SK-N-SH (cell line): ENCODE measurements at regions of chr9 and their contacts with region 1.

Region 1: GRCh38 chr9:127503947-127504782 is 52.9 kb downstream of the LRSAM1 start:
- DNase-seq: peak; percentile 86
- H3K4me3 ChIP-seq: no peak overlapping the region; a peak in 1 of 4 replicates
- H3K27ac ChIP-seq: peak overlapping the region; percentile 4 to 59; a peak in 3 of 4 replicates
- H3K4me1 ChIP-seq: peaks cover 10 to 18% of the 10 kb centered on the region in 2 experiments; a peak in 2 of 4 replicates
- H3K27me3 ChIP-seq: no peaks in the 10 kb centered on the region
- CTCF ChIP-seq: peak; percentile 78
- EP300 ChIP-seq: no peak
- RAD21 ChIP-seq: peak; percentile 91

Region 2: DNA sequence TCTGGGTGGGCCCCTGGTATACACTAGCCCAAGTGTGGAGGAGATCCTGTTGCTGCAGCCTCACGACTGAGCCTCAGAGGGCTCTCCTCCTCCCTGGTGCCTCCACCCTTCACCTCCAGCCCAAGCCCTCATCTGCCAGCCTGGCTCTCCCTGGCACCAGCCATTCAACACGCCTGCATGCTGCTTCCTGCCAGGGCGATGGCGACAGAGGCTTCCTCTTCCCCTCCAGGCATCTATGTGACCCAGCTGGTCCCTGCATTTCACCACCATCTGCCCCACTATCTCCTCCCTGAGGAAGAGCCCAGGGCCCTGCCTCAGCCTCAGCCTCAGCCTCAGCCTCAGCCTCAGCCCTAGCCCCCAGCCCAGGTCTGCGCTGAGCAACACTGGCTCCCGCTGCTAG is 326.9 kb before region 1 on chr9:
- CTCF ChIA-PET with region 1: no interaction called
- POLR2A ChIA-PET with region 1: no interaction called
- DNase-seq: no peak
- H3K4me3 ChIP-seq: no peak overlapping the region
- H3K27ac ChIP-seq: no peak overlapping the region
- H3K4me1 ChIP-seq: peaks cover 0 to 12% of the 10 kb centered on the region in 2 experiments; a peak in 1 of 4 replicates
- H3K27me3 ChIP-seq: no peaks in the 10 kb centered on the region
- CTCF ChIP-seq: no peak
- EP300 ChIP-seq: no peak
- RAD21 ChIP-seq: no peak

Region 3: DNA sequence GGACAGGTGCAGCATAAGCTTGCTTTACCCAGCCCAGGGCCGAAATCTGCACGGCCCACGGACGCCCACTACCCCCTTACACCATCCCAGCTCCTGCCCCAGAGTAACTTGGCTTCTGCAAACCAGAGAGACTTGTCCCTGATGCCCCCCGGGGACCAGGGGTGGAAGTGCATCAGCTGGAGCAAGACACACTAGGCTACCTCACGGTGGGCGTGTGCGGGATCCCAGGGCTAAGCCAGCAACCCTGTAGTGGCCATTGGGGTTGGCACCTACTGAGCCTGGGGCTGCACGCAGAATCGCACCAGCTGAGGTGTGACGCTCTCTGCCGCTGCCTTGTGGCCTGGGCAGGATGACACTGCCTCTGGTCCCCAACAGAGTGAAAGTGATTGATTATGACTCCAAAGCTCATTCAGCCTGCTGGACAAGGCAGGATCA is 86.1 kb before region 1 on chr9:
- CTCF ChIA-PET with region 1: no interaction called
- POLR2A ChIA-PET with region 1: no interaction called
- DNase-seq: peak; percentile 53
- H3K4me3 ChIP-seq: no peak overlapping the region
- H3K27ac ChIP-seq: no peak overlapping the region
- H3K4me1 ChIP-seq: peaks cover 7 to 17% of the 10 kb centered on the region in 2 experiments; a peak in 2 of 4 replicates
- H3K27me3 ChIP-seq: no peaks in the 10 kb centered on the region
- CTCF ChIP-seq: no peak; the same call in 1 of the 2 replicates
- EP300 ChIP-seq: no peak
- RAD21 ChIP-seq: no peak

Region 4: GRCh38 chr9:127489471-127490115 is 14.6 kb before region 1 on chr9:
- CTCF ChIA-PET with region 1: interaction called, 25 read pairs
- POLR2A ChIA-PET with region 1: no interaction called
- DNase-seq: peak; percentile 71
- H3K4me3 ChIP-seq: no peak overlapping the region
- H3K27ac ChIP-seq: no peak overlapping the region
- H3K4me1 ChIP-seq: no peaks in the 10 kb centered on the region
- H3K27me3 ChIP-seq: no peaks in the 10 kb centered on the region
- CTCF ChIP-seq: 0 out of 2 replicates have a peak, but pooled peaks have one; percentile 14
- EP300 ChIP-seq: no peak
- RAD21 ChIP-seq: peak; percentile 24

Region 5: DNA sequence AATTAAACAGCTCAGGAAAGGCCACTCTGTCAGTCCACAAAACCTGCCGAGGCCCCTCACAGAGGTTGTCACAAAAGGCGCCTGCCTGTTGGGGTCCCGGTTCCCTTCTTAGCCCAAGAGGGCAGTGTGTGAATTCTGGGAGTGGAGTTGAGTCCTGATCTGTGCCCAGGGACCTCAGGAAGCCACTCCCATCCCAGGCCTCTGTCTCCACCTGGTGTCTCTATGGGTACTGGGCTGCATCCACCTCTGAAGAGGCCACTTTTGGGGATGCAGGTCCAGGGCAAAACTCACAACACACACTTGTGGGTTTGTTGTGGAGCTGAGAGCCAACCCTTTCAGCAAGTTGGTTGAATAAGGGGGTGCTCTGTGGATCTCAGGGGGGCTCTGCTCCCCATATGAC is 33.6 kb after region 1 on chr9:
- CTCF ChIA-PET with region 1: interaction called, 10 read pairs
- POLR2A ChIA-PET with region 1: no interaction called
- DNase-seq: peak; percentile 59
- H3K4me3 ChIP-seq: no peak overlapping the region
- H3K27ac ChIP-seq: peak overlapping the region in 1 of 2 experiments; percentile 91; a peak in 2 of 4 replicates
- H3K4me1 ChIP-seq: peaks cover 13 to 29% of the 10 kb centered on the region in 2 experiments; a peak in 3 of 4 replicates
- H3K27me3 ChIP-seq: no peaks in the 10 kb centered on the region
- CTCF ChIP-seq: peak; percentile 36
- EP300 ChIP-seq: no peak
- RAD21 ChIP-seq: peak; percentile 57

Region 6: GRCh38 chr9:127574072-127575017 is 70.2 kb after region 1 on chr9:
- CTCF ChIA-PET with region 1: interaction called, 277 read pairs
- POLR2A ChIA-PET with region 1: no interaction called
- DNase-seq: no peak
- H3K4me3 ChIP-seq: 0 out of 4 replicates have a peak overlapping the region, but pooled peaks of 1 of the 2 experiments have one; percentile 1
- H3K27ac ChIP-seq: peak overlapping the region; percentile 51 to 68; a peak in 3 of 4 replicates
- H3K4me1 ChIP-seq: peaks cover 22 to 24% of the 10 kb centered on the region in 2 experiments; a peak in 3 of 4 replicates
- H3K27me3 ChIP-seq: no peaks in the 10 kb centered on the region
- CTCF ChIP-seq: no peak
- EP300 ChIP-seq: no peak
- RAD21 ChIP-seq: 0 out of 2 replicates have a peak, but pooled peaks have one; percentile 18

Region 7: DNA sequence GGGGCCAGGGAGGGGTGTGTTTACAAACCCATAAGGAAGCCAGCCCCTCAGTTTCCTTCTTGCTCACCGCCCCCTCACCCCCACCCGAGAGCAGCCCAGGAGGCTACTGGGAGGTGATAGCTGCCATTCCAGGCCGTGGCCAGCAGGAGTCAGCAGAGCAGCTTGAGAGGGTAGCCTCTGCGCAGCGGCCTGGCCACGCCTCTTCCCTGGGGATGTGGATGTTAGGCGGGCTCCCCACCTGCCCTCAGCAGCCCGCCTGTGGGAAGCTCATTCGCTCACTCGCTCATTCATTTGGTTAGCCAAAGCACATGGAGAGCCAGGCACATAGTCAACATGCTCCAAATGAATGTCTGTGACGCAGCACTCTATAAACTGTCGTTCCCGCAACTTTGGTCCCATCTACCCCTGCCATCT is 439.6 kb after region 1 on chr9:
- CTCF ChIA-PET with region 1: no interaction called
- POLR2A ChIA-PET with region 1: no interaction called
- DNase-seq: peak; percentile 92
- H3K4me3 ChIP-seq: peak overlapping the region in 1 of 2 experiments; percentile 16; a peak in 1 of 4 replicates
- H3K27ac ChIP-seq: peak overlapping the region in 1 of 2 experiments; percentile 62; a peak in 1 of 4 replicates
- H3K4me1 ChIP-seq: peaks cover 0 to 50% of the 10 kb centered on the region in 2 experiments; a peak in 1 of 4 replicates
- H3K27me3 ChIP-seq: no peaks in the 10 kb centered on the region
- CTCF ChIP-seq: peak; percentile 90
- EP300 ChIP-seq: no peak
- RAD21 ChIP-seq: peak; percentile 91

Region 8: DNA sequence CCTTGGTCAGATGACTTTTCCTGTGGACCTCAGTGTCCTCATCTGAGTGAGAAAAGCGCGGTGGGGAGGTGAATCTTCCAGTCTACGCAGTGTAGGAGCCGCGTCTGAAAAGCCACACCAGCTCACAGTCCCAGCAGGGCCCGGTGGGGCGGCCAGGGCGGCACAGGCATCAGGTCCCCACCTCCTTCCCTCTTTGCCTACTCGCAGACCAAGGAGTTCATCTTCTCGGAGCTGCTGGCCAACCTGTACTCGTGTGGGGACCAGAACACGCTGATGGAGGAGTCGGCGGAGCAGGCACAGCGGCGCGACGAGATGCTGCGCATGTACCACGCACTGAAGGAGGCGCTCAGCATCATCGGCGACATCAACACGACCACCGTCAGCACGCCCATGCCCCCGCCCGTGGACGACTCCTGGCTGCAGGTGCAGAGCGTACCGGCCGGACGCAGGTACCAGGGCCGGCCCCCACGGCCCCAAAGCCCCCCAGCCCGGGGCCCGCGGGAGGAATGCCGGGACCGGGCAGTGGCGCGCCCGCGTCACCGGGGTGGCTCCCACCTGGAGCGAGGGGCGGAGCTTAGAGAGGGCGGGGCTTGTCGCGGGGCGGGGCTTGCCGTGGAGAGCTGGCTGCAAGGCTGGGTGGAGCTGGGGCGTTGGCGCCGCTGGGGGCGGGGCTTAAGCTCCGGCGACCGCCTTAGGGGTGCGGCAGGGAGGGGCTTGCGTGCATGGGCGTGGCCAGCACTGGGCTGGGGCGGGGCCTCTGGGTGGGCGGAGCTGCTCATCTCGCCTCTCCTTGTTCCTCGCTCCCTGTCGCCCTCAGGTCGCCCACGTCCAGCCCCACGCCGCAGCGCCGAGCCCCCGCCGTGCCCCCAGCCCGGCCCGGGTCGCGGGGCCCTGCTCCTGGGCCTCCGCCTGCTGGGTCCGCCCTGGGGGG is 746.0 kb after region 1 on chr9:
- CTCF ChIA-PET with region 1: no interaction called
- POLR2A ChIA-PET with region 1: no interaction called
- DNase-seq: peak; percentile 92
- H3K4me3 ChIP-seq: no peak overlapping the region
- H3K27ac ChIP-seq: no peak overlapping the region; a peak in 1 of 4 replicates
- H3K4me1 ChIP-seq: peaks cover 12 to 17% of the 10 kb centered on the region in 2 experiments
- H3K27me3 ChIP-seq: no peaks in the 10 kb centered on the region
- CTCF ChIP-seq: no peak
- EP300 ChIP-seq: no peak
- RAD21 ChIP-seq: no peak